BJ (cell line): ENCODE measurements at regions of chr14 and their contacts with region 1.

Region 1: DNA sequence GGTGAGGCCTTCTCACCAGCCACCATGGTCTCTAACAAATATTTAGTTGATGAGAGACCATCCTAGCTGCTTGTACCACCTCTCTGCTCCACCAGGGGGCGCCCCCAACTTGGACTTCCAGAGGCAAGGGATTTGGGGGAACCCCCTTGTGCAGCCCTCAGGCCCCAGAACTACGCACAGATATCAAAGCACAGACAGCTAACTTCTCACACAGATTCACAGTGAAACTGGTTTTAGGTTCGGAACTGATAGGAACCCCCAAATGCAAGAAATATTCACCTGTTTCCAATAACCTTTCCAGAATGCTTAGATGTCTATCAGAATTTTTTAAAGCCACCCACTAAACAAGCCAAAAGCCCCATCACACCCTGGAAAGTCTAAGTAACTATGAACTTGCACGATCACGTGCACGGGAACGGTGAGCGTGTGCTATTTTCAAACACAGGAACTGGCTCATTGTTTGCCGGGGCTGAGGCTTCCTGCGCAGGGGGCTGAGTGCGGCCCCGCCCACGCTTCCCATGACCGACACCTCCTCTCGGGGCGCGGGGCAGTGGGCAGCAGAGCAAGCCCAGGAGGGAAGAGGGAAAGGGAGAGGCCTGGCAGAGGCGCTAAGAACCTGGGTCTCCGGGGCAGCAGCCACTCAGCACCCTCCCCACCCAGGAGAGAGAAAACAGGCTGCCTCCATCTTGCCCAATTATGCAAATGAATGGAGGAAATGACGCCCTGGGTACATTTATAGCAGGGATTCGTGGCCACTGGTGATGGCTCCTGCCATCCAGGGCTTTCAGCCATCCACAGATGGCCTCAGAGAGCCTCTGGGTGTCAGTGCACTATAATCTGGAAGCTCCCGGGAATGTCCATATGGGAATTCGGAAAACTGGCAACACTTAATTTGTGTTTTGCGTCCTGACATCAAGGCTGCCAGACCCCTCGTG is 79.4 kb upstream of the GPR68 start:
- DNase-seq: peak; percentile 4
- H3K4me3 ChIP-seq: peak overlapping the region; percentile 36
- H3K27me3 ChIP-seq: no peaks in the 10 kb centered on the region
- CTCF ChIP-seq: peak; percentile 97

Region 2: DNA sequence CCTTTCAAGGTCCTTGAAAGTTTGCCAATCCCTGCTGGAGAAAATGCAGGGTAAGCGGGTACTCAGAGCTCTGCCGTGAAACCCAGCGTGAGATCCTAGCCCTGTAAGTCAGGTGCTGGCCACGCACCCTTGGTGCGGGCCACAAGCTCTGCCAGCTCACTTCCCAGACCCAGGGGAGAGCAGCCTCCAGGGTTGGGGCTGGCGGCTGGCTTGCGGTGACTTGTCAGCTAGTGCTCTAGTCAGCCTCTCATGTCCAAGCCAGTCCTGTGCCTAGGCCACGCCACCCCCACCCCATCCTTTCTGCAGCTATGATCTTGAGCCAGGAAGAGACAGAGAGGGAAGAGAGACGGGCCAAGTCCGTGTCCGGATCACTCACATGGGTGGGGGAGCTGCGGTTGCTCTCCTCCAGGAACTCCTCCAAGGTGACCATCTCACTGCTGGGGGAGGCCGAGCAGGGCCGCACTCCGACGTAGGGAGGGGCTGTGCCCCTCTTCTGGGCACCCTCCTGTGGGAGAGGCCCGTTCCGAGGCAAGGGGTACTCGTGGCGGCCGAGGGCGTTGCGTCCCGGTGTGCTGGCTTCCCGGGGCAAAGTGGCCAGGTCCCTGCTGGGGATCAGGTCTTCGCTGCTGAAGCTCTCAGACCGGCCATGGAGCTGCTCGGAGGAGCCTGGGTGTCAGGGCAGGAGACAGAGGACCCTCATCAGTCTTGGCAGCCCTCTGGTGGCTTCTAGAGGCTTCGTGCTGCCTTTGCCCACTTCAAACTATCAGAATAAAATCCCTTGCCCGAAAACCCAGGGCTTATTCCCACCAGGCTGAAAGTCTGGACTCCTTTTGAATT is 46.2 kb before region 1 on chr14:
- CTCF ChIA-PET with region 1: no interaction called
- POLR2A ChIA-PET with region 1: interaction called, 10 read pairs
- DNase-seq: no peak
- H3K4me3 ChIP-seq: no peak overlapping the region
- H3K27me3 ChIP-seq: no peaks in the 10 kb centered on the region
- CTCF ChIP-seq: no peak

Region 3: GRCh38 chr14:91341751-91342154 is 17.8 kb after region 1 on chr14:
- CTCF ChIA-PET with region 1: interaction called, 14 read pairs
- POLR2A ChIA-PET with region 1: no interaction called
- DNase-seq: no peak
- H3K4me3 ChIP-seq: no peak overlapping the region
- H3K27me3 ChIP-seq: peaks cover 1% of the 10 kb centered on the region; the same call in 1 of the 2 replicates
- CTCF ChIP-seq: no peak

Region 4: DNA sequence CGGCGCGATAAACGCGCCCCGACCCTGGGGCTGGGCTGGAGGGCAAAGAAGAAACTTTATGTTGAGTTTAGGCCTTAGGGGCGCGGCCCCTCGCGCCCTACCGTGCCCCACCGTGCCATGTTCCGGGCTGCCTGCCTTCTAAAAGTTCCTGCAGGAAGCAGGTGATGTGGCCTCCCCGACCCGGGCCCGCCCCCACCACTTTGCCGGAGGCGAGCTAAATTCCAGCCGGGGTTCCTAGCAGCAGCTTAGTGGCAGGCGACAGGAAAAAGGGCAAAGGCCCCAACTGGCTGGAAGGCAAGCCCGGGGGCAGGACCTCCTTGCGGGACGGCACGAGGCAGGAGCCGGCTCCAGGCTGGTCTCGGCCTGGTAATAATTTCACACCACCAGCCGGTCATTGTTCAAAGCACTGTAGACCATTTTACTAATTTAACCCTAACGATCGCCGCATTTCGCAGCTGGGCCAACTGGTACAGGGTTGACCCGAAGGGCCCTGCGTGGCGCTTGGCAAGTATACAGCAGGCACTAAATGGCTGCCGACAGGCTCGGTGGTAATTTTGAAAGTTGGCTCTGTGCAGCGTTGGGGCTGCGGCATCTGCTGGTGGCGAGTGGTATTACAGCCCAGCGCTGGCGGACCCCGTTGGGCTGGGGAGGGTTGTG is 94.6 kb after region 1 on chr14:
- CTCF ChIA-PET with region 1: interaction called, 87 read pairs
- POLR2A ChIA-PET with region 1: no interaction called
- DNase-seq: no peak
- H3K4me3 ChIP-seq: 0 out of 2 replicates have a peak overlapping the region, but pooled peaks have one; percentile 23
- H3K27me3 ChIP-seq: peaks cover 16% of the 10 kb centered on the region
- CTCF ChIP-seq: peak; percentile 95